Heart right ventricle (tissue), 16 donors: ENCODE measurements at regions of chr17 and their contacts with region 1.

Region 1: DNA sequence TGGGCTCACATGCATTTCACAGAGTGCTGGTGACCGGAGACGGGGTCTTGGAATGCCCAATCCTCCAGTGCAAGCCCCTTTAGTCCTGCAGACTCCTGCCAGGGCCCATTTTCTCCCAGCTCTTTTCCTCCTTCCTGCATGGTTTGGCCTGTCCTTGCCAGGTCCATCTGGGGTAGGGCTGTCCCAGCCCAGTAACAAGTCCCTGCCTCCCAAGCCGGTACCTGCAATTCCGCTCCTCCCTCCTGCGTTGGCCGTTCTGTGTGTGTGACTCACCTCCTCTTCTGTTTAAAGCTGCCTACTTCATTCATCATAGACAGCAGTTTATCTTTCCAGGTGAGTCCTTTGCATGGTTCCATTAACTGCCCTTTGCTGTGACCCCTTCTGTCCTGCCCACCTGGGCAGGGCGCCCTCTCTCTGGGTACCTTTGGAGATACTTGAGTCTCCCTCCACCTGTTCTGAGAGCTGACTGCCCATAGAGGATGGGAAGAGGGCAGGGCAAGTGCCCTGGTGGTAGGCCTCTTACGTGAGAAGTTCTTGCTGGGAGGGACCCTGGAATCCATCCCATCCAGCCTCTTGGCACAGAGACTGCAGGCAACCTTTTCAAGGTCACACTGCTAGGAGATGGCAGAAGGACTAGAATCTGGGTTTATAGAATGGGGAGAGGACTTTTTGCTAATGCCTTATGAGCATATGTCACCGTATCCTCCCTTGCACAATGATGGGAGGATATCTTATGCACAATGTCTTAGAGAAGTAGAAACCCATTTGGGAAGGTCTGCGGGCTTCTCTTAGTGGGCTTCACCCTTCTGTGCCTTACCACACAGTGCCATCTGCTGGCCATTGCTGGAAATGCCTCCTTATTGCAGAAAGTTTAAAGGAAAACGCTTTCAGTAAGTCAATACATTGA is 29.7 kb upstream of the LGALS9 start:
- DNase-seq: peak; percentile 71 to 82
- ATAC-seq: peak; percentile 31 to 70 (median 55)
- H3K4me3 ChIP-seq: no peak overlapping the region
- H3K27ac ChIP-seq: no peak overlapping the region
- H3K4me1 ChIP-seq: peaks cover 0 to 27% (median 9%) of the 10 kb centered on the region in 9 donors
- H3K27me3 ChIP-seq: no peaks in the 10 kb centered on the region
- CTCF ChIP-seq: peak; percentile 92 to 96 (median 95)

Region 2: GRCh38 chr17:27236717-27237315 is 364.5 kb before region 1 on chr17:
- intact Hi-C with region 1: loop called (anchors 1 to 5 kb)
- DNase-seq: peak in 1 of 2 donors; percentile 80
- ATAC-seq: peak in 7 of 8 donors; percentile 61 to 79 (median 77)
- H3K4me3 ChIP-seq: no peak overlapping the region
- H3K27ac ChIP-seq: no peak overlapping the region
- H3K4me1 ChIP-seq: peaks cover 0 to 54% (median 3%) of the 10 kb centered on the region in 9 donors
- H3K27me3 ChIP-seq: no peaks in the 10 kb centered on the region
- CTCF ChIP-seq: peak; percentile 84 to 97 (median 94)

Region 3: GRCh38 chr17:27353461-27354050 is 247.8 kb before region 1 on chr17:
- intact Hi-C with region 1: loop called (anchors 1 to 5 kb)
- DNase-seq: peak; percentile 94 to 96
- ATAC-seq: peak; percentile 93 to 97 (median 97)
- H3K4me3 ChIP-seq: peak overlapping the region; percentile 49 to 75 (median 61)
- H3K27ac ChIP-seq: peak overlapping the region; percentile 82 to 98 (median 93)
- H3K4me1 ChIP-seq: peaks cover 9 to 42% (median 27%) of the 10 kb centered on the region in 9 donors
- H3K27me3 ChIP-seq: no peaks in the 10 kb centered on the region
- CTCF ChIP-seq: peak; percentile 85 to 99 (median 98)

Region 4: GRCh38 chr17:27446569-27447301 is 154.6 kb before region 1 on chr17:
- intact Hi-C with region 1: loop called in 1 of 10 experiments (anchors 5 kb)
- DNase-seq: no peak
- ATAC-seq: peak in 1 of 8 donors; percentile 27
- H3K4me3 ChIP-seq: no peak overlapping the region
- H3K27ac ChIP-seq: no peak overlapping the region
- H3K4me1 ChIP-seq: peaks cover 0 to 15% (median 0%) of the 10 kb centered on the region in 9 donors
- H3K27me3 ChIP-seq: no peaks in the 10 kb centered on the region
- CTCF ChIP-seq: no peak

Region 5: GRCh38 chr17:27494192-27495091 is 106.9 kb before region 1 on chr17:
- intact Hi-C with region 1: loop called in 6 of 10 experiments (anchors 5 to 10 kb)
- DNase-seq: peak; percentile 23 to 63
- ATAC-seq: peak; percentile 49 to 87 (median 70)
- H3K4me3 ChIP-seq: no peak overlapping the region
- H3K27ac ChIP-seq: peak overlapping the region in 4 of 10 donors; percentile 14 to 73 (median 23)
- H3K4me1 ChIP-seq: peaks cover under 1 to 42% (median 30%) of the 10 kb centered on the region in 9 donors
- H3K27me3 ChIP-seq: no peaks in the 10 kb centered on the region
- CTCF ChIP-seq: peak in 7 of 9 donors; percentile 26 to 61 (median 43)

Region 6: DNA sequence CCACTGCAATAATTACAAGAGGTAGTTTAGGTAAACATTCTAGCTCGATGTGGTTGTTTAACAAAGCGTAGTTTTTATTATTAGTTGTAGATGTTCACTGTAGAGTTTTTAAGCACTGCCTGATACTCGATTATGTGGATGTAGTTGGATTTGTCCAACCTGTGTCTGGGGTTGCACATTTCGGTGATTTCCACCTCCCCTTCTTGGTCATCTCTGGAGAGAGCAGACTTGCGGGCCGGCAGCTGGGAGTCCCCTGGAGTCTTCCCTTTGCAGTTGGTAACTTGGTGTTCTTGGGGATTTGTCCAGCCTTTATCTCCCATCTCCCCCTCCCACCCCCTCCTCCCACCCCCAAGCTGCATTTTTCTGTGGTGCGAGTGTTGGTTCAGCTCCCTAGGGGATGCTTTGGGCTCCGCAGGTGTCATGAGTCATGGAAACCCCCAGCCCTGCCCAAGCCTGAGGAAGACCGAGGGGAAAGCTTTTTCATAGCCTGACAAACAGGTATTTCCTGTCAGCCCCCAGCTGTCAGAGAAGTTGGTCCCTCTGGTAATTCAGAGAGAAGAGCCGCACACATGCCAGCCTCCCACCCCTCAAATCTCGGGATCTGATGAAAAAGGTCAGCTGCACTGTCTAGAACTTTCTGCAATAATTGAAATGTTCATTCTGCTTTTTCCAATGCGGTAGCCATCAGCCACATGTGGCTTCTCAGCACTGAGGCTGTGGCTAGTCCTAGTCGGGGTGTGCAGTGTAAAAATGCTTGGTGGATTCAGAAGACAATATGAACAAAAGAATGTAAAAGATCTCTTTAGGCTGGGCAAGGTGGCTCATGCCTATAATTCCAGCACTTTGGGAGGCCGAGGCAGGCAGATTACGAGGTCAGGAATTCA is 94.7 kb before region 1 on chr17:
- intact Hi-C with region 1: no loop called
- DNase-seq: no peak
- ATAC-seq: no peak
- H3K4me3 ChIP-seq: no peak overlapping the region
- H3K27ac ChIP-seq: no peak overlapping the region
- H3K4me1 ChIP-seq: peaks cover 0 to 31% (median 17%) of the 10 kb centered on the region in 9 donors
- H3K27me3 ChIP-seq: no peaks in the 10 kb centered on the region
- CTCF ChIP-seq: no peak

Region 7: DNA sequence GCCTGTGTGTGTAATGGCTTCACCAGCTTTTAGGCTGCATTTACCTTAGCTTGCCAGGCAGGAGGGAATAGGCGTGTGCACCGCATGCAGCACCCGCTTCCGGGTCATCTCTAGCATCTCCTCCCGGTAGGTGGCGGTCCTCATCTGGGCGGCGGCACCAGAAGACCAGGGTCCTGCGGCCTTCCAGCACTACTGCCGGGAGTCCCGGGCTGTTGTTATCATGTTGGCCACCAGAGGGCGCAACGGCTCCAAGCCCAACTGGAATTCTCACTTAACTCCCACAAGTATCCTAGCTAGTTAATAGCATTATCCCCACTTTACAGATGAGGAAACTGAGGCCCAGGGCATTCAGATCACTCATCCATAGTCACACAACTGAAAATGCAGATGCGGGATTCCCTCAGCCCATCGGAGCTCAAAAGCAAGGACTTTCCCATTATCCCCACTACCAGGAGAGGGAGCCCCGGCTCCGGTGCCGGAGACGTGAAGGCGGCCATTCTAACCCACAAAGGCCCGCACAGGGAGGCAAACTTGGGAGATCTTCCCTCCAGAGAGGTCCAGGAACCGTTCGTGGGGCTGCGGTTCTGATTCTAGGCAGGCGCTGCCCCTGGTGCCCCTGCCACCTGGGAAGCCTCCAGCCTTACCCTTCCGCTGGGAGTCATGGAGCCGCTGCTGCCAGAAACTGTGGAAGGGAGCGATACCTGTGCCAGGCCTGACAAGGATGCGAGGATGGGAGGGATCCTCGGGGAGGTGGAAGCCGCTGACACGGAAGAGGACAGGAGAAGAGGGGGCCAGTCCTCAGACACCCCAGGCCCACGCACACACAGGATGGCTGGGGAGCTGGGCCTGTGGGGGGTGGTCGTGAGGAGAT is 53.6 kb after region 1 on chr17:
- intact Hi-C with region 1: loop called in 8 of 10 experiments (anchors 1 to 5 kb)
- DNase-seq: peak; percentile 54 to 74
- ATAC-seq: peak in 7 of 8 donors; percentile 25 to 52 (median 46)
- H3K4me3 ChIP-seq: no peak overlapping the region
- H3K27ac ChIP-seq: no peak overlapping the region
- H3K4me1 ChIP-seq: peaks cover 0 to 4% (median 0%) of the 10 kb centered on the region in 9 donors
- H3K27me3 ChIP-seq: peaks cover 0 to 6% (median 0%) of the 10 kb centered on the region in 7 donors
- CTCF ChIP-seq: peak; percentile 88 to 97 (median 92)

Region 8: DNA sequence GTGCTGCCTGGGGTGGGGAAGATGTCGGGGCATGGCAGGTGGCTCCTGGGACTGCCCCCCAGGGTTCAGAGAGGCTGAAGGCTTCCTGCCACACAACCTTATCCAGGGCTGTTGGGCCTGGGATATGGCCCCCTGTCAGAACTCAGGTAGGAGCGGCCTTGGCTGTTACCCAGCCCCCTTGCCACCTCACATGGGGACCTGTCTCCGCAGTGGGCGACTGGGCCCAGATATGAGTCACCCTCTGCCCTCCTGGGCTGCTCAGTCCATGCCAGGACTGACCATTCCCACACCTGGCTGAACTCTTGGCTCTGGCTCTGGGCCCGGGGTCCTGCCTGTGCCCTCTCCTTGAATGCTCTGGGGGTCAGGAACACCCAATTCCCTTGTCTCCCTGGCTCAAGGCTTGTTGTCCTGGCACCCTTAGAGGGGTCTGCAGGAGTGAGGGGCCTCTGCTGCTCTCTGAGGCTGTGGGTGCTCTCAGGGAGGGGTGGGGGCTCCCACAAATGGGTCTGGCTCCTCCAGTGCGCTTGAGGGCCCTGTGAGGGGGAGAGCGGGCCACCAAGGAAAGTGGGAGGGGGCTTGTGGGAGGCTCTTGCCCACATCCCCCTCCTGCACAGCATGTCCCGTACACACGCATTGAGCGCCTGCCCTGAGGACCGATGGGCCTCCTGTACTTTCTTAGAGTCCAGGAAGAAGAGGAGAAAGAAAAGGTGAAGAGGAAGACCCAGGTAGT is 65.7 kb after region 1 on chr17:
- intact Hi-C with region 1: no loop called
- DNase-seq: no peak
- ATAC-seq: no peak
- H3K4me3 ChIP-seq: no peak overlapping the region
- H3K27ac ChIP-seq: no peak overlapping the region
- H3K4me1 ChIP-seq: no peaks in the 10 kb centered on the region
- H3K27me3 ChIP-seq: no peaks in the 10 kb centered on the region
- CTCF ChIP-seq: no peak

Region 9: GRCh38 chr17:27760069-27760885 is 159.0 kb after region 1 on chr17:
- intact Hi-C with region 1: loop called in 4 of 10 experiments (anchors 5 to 10 kb)
- DNase-seq: peak; percentile 58 to 75
- ATAC-seq: peak in 7 of 8 donors; percentile 39 to 69 (median 59)
- H3K4me3 ChIP-seq: no peak overlapping the region
- H3K27ac ChIP-seq: no peak overlapping the region
- H3K4me1 ChIP-seq: no peaks in the 10 kb centered on the region
- H3K27me3 ChIP-seq: no peaks in the 10 kb centered on the region
- CTCF ChIP-seq: peak; percentile 83 to 96 (median 92)

Region 10: DNA sequence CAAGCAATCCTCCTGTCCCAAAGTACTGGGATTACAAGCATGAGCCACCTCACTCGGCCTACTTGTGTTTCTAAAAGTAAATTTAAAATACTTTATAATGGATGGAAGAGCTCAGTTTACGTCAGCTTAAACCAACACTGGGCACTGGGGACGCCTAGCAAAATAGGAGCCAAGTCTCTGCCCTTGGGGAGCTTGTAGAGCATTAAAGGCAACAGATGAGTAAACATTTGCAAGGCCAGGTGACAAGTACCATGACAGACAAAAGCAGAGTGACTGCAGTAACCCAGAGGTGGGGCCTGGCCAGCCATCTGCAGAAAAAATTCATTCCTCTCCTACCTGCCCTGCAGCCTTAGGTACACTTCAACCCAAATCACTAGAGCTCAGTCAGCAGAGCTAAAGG is 429.1 kb after region 1 on chr17:
- intact Hi-C with region 1: no loop called
- DNase-seq: no peak
- ATAC-seq: no peak
- H3K4me3 ChIP-seq: no peak overlapping the region
- H3K27ac ChIP-seq: no peak overlapping the region
- H3K4me1 ChIP-seq: peaks cover 0 to 19% (median 0%) of the 10 kb centered on the region in 9 donors
- H3K27me3 ChIP-seq: no peaks in the 10 kb centered on the region
- CTCF ChIP-seq: no peak